GM12878 (cell line): ENCODE measurements at regions of chr14 and their contacts with region 1.

Region 1: DNA sequence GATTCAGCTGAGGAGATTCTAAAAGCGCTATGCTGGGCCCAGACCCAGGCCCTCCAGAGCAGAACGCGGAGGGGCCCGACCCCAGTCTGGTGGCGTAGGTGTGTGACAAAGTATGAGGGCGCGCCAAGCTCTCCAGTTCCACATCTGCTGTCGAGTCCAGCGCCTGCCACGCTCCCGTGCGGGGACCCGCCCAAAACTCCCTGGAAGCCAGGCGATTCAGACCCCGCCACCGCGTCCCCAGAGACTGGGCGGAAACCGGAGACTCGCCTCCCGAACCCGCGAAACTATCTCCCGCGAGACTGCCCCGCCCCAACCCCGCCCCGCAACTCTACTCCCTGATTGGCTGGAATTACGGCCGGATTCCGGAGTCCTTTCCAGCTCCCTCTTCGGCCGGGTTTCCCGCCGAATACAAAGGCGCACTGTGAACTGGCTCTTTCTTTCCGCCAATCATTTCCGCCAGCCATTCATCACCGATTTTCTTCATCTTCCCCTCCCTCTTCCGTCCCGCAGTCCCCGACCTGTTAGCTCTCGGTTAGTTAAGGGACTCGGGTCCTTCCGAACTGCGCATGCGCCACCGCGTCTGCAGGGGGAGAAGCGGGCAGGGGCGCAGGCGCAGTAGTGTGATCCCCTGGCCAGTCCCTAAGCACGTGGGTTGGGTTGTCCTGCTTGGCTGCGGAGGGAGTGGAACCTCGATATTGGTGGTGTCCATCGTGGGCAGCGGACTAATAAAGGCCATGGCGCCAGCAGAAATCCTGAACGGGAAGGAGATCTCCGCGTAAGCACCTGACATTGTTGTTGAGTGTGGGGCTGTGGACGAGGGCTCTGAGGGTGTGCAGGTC is at the start of gene MTHFD1:
- DNase-seq: peak; percentile 99
- ATAC-seq: peak; percentile 87
- H3K4me3 ChIP-seq: peak within 1 kb of the TSS; percentile 97
- H3K27ac ChIP-seq: peak within 1 kb of the TSS; percentile 82
- H3K4me1 ChIP-seq: peaks cover 10% of the 10 kb centered on the region
- H3K27me3 ChIP-seq: no peaks in the 10 kb centered on the region
- CTCF ChIP-seq: no peak
- EP300 ChIP-seq: 0 out of 4 replicates have a peak, but pooled peaks of 1 of the 2 experiments have one; percentile 13
- POLR2A ChIP-seq: peak; percentile 83
- RAD21 ChIP-seq: no peak
- polyA plus RNA-seq, gene MTHFD1: 140 to 177 TPM

Region 2: DNA sequence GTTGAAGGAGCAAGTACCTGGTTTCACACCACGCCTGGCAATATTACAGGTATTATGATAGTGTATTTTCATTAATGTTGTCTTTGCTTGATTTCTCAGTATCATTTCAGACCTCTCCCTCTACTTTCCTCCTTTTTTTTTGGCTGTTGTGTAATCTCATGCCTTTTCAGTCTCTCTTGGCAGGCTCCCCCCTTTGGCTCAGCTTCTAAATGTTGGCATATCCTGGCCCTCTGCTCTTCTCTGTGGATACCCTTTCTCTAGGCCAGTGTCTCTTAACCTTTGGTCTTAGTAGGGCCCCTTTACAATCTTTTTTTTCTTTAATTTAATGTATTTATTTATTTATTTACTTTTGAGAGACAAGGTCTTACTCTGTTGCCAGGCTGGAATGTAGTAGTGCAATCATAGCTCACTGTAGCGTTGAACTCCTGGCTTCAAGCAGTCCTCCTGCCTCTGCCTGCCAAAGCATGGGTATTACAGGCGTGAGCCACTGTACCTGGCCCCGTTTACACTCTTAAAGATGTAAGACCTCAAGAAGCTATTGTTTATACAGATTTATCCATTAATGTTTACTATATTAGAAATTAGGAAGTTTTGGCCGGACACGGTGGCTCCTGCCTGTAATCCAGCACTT is 13.0 kb after region 1 on chr14:
- CTCF ChIA-PET with region 1: interaction called, 25 read pairs
- POLR2A ChIA-PET with region 1: interaction called, 12 read pairs
- RAD21 ChIA-PET with region 1: interaction called, 5 read pairs
- SMC1A ChIA-PET with region 1: interaction called, 29 read pairs
- in situ Hi-C with region 1: no loop called
- intact Hi-C with region 1: no loop called
- DNase-seq: no peak
- ATAC-seq: no peak
- H3K4me3 ChIP-seq: no peak overlapping the region
- H3K27ac ChIP-seq: no peak overlapping the region
- H3K4me1 ChIP-seq: no peaks in the 10 kb centered on the region
- H3K27me3 ChIP-seq: no peaks in the 10 kb centered on the region
- CTCF ChIP-seq: no peak
- EP300 ChIP-seq: no peak
- POLR2A ChIP-seq: no peak
- RAD21 ChIP-seq: no peak

Region 3: GRCh38 chr14:64421166-64421565 is 33.3 kb after region 1 on chr14:
- CTCF ChIA-PET with region 1: interaction called, 5 read pairs
- POLR2A ChIA-PET with region 1: no interaction called
- RAD21 ChIA-PET with region 1: no interaction called
- SMC1A ChIA-PET with region 1: interaction called, 21 read pairs
- in situ Hi-C with region 1: no loop called
- intact Hi-C with region 1: no loop called
- DNase-seq: no peak
- ATAC-seq: no peak
- H3K4me3 ChIP-seq: no peak overlapping the region
- H3K27ac ChIP-seq: no peak overlapping the region
- H3K4me1 ChIP-seq: peaks cover 3% of the 10 kb centered on the region; the same call in 1 of the 2 replicates
- H3K27me3 ChIP-seq: no peaks in the 10 kb centered on the region
- CTCF ChIP-seq: no peak
- EP300 ChIP-seq: no peak
- POLR2A ChIP-seq: no peak
- RAD21 ChIP-seq: no peak

Region 4: GRCh38 chr14:64465191-64465822 is 77.4 kb after region 1 on chr14 and contains the start of gene AKAP5:
- CTCF ChIA-PET with region 1: interaction called, 4 read pairs
- POLR2A ChIA-PET with region 1: interaction called, 5 read pairs
- RAD21 ChIA-PET with region 1: interaction called, 12 read pairs
- SMC1A ChIA-PET with region 1: interaction called, 9 read pairs
- in situ Hi-C with region 1: no loop called
- intact Hi-C with region 1: no loop called
- DNase-seq: no peak
- ATAC-seq: peak; percentile 89
- H3K4me3 ChIP-seq: peak within 1 kb of the TSS; percentile 79
- H3K27ac ChIP-seq: peak within 1 kb of the TSS; percentile 29; the same call in 1 of the 2 replicates
- H3K4me1 ChIP-seq: peaks cover 33% of the 10 kb centered on the region
- H3K27me3 ChIP-seq: no peaks in the 10 kb centered on the region
- CTCF ChIP-seq: 0 out of 6 replicates have a peak, but pooled peaks of 1 of the 3 experiments have one; percentile 4
- EP300 ChIP-seq: no peak
- POLR2A ChIP-seq: peak; percentile 75
- RAD21 ChIP-seq: no peak
- polyA plus RNA-seq, gene AKAP5: 0.45 to 1.5 TPM

Region 5: GRCh38 chr14:64503478-64504309 is 115.8 kb after region 1 on chr14 and contains the start of gene ZBTB25:
- CTCF ChIA-PET with region 1: interaction called, 3 read pairs
- POLR2A ChIA-PET with region 1: interaction called, 14 read pairs
- RAD21 ChIA-PET with region 1: interaction called, 8 read pairs
- SMC1A ChIA-PET with region 1: interaction called, 5 read pairs
- in situ Hi-C with region 1: no loop called
- intact Hi-C with region 1: loop called (anchors 2 kb)
- DNase-seq: peak; percentile 83
- ATAC-seq: peak; percentile 71
- H3K4me3 ChIP-seq: peak within 1 kb of the TSS; percentile 91
- H3K27ac ChIP-seq: peak within 1 kb of the TSS; percentile 98
- H3K4me1 ChIP-seq: peaks cover 6% of the 10 kb centered on the region
- H3K27me3 ChIP-seq: no peaks in the 10 kb centered on the region
- CTCF ChIP-seq: no peak
- EP300 ChIP-seq: peak; percentile 82 to 86
- POLR2A ChIP-seq: peak; percentile 85
- RAD21 ChIP-seq: no peak
- polyA plus RNA-seq, gene ZBTB25: 4.1 to 5.6 TPM